Activated CD4-positive, alpha-beta T cell treated with anti-CD3 and anti-CD28 coated beads, Interleukin-2, amount 10 ng/mL, durations not matched to agents 24 days and 14 days (primary cell): ENCODE measurements at regions of chr17 and their contacts with region 1.

Region 1: DNA sequence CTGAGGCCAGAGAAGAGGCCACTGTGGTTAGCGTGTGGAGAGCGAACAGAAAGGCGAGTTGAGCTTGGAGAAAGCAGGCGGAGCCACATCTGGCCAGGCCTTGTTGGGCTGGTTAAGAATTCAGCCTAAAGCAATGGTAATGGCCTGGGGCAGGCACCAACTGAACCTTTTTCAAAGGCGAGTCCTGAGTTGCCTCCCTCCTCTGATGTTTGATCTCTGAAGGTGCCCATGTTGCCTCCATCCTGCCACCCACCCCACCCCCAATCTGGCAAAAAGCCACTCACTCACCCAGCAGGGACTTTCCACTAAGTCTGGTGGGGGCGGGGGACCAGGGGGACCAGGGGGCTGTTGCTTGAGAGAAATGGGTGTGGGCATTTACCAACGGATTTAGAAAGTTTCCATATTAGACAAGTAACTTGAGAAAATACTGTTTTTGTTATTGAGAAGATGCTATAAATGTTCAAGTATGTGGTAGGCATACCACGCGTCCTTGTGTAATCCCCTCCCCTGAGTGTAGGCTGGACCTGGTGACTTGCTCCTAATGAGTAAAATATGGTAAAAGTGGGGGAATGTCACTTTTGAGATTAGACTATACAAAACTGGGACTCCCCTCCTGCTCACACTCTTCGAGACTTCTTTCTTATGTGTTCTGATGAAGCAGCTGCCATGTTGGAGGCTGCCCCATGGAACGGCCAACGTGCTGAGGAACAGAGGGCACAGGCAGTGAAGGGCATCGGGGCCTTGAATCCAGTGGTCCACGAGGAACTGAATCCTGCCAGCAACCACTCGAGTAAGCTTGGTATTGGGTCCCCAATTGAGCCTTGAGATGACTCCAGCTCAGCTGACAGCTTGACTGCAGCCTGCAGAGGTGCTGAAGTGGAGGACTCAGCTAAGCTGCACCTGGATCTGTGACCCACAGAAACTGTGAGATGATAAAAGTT is 29.9 kb upstream of the TNS4 start:
- DNase-seq: peak; percentile 85
- H3K4me3 Mint-ChIP-seq: peak overlapping the region; percentile 85
- H3K27ac Mint-ChIP-seq: peak overlapping the region; percentile 99
- H3K4me1 Mint-ChIP-seq: peaks cover 71% of the 10 kb centered on the region
- H3K27me3 Mint-ChIP-seq: peaks cover 2% of the 10 kb centered on the region

Region 2: GRCh38 chr17:40362696-40363110 is 168.6 kb before region 1 on chr17:
- intact Hi-C with region 1: loop called (anchors 1 kb)
- DNase-seq: peak; percentile 96
- H3K4me3 Mint-ChIP-seq: peak overlapping the region; percentile 83
- H3K27ac Mint-ChIP-seq: peak overlapping the region; percentile 67
- H3K4me1 Mint-ChIP-seq: peaks cover 20% of the 10 kb centered on the region
- H3K27me3 Mint-ChIP-seq: no peaks in the 10 kb centered on the region

Region 3: GRCh38 chr17:40417609-40418427 is 113.5 kb before region 1 on chr17 and contains the start of gene TOP2A:
- intact Hi-C with region 1: loop called (anchors 1 kb)
- DNase-seq: peak; percentile 99
- H3K4me3 Mint-ChIP-seq: peak within 1 kb of the TSS; percentile 99
- H3K27ac Mint-ChIP-seq: peak within 1 kb of the TSS; percentile 97
- H3K4me1 Mint-ChIP-seq: peaks cover 31% of the 10 kb centered on the region
- H3K27me3 Mint-ChIP-seq: no peaks in the 10 kb centered on the region
- total RNA-seq, gene TOP2A: 189 and 194 TPM in 2 replicates

Region 4: GRCh38 chr17:40480501-40481003 is 50.8 kb before region 1 on chr17:
- intact Hi-C with region 1: loop called (anchors 1 kb)
- DNase-seq: peak; percentile 93
- H3K4me3 Mint-ChIP-seq: peak overlapping the region; percentile 79
- H3K27ac Mint-ChIP-seq: peak overlapping the region; percentile 95
- H3K4me1 Mint-ChIP-seq: peaks cover 75% of the 10 kb centered on the region
- H3K27me3 Mint-ChIP-seq: no peaks in the 10 kb centered on the region

Region 5: GRCh38 chr17:40542558-40543411 is 11.5 kb after region 1 on chr17:
- intact Hi-C with region 1: loop called (anchors 1 kb)
- DNase-seq: peak; percentile 83
- H3K4me3 Mint-ChIP-seq: peak overlapping the region; percentile 66
- H3K27ac Mint-ChIP-seq: peak overlapping the region; percentile 92
- H3K4me1 Mint-ChIP-seq: peaks cover 80% of the 10 kb centered on the region
- H3K27me3 Mint-ChIP-seq: no peaks in the 10 kb centered on the region

Region 6: GRCh38 chr17:40615295-40615988 is 84.1 kb after region 1 on chr17:
- intact Hi-C with region 1: no loop called
- DNase-seq: peak; percentile 81
- H3K4me3 Mint-ChIP-seq: peak overlapping the region; percentile 47
- H3K27ac Mint-ChIP-seq: peak overlapping the region; percentile 85
- H3K4me1 Mint-ChIP-seq: peaks cover 67% of the 10 kb centered on the region
- H3K27me3 Mint-ChIP-seq: no peaks in the 10 kb centered on the region

Region 7: GRCh38 chr17:41098476-41098875 is 567.2 kb after region 1 on chr17:
- intact Hi-C with region 1: no loop called
- DNase-seq: no peak
- H3K4me3 Mint-ChIP-seq: no peak overlapping the region
- H3K27ac Mint-ChIP-seq: no peak overlapping the region
- H3K4me1 Mint-ChIP-seq: no peaks in the 10 kb centered on the region
- H3K27me3 Mint-ChIP-seq: peaks cover 11% of the 10 kb centered on the region